A549 (cell line): ENCODE measurements at regions of chr17 and their contacts with region 1.

Region 1: DNA sequence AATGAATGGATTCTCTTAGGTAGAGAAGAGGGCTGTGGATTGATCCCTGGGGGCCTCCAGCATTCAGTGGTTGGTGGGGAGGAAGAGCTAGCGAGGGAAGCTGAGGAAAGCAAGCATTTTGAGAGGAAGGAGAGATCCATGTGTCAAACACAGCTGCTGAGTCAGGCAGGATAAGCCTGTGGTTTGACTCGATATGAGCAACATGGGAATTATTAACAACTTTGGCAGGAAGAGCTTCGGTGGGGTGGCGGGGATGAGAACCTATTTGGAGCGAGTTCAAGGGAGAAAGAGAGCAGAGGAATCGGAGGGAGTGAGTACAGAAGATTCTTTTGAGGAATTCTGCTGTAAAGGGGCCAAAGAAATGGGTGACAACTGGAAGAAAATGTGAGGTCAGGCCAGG is 59.5 kb upstream of the CDC42EP4 start:
- DNase-seq: peak in 1 of 2 experiments; percentile 44
- ATAC-seq: no peak
- H3K4me3 ChIP-seq: no peak overlapping the region
- H3K27ac ChIP-seq: no peak overlapping the region
- H3K4me1 ChIP-seq: 0 out of 3 replicates have a peak, but pooled peaks cover 7% of the 10 kb centered on the region
- CTCF ChIP-seq: no peak
- EP300 ChIP-seq: no peak
- POLR2A ChIP-seq: no peak
- RAD21 ChIP-seq: no peak

Region 2: DNA sequence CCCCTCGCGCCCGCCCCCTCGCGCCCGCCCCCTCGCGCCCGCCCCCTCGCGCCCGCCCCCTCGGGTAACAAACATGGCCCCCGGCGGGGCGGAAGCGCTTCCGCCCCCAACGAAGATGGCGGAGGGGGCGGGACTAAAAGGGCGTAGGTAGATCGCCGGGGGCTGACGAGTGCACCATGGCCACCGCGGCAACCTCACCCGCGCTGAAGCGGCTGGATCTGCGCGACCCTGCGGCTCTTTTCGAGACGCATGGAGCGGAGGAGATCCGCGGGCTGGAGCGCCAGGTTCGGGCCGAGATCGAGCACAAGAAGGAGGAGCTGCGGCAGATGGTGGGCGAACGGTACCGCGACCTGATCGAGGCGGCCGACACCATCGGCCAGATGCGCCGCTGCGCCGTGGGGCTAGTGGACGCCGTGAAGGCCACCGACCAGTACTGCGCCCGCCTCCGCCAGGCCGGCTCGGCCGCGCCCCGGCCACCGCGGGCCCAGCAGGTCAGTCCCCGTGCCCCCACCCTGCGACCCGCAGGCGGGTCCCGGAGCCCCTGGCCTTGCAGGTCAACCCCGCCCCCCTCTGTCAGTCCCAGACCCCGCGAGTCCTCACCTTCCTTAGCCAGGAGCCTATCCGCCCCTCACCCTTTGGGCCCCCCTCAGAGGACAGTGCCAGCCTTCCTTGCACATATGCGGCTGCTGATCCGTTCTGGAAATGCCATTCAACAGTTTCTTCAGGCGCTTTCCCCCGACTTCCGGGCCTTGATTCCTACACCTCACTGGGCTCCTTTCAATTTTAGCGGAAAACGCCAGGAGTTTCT is 178.2 kb before region 1 on chr17 and contains the start of gene COG1:
- CTCF ChIA-PET with region 1: interaction called, 45 read pairs
- POLR2A ChIA-PET with region 1: no interaction called
- DNase-seq: peak; percentile 91 to 96
- ATAC-seq: peak; percentile 72 to 80
- H3K4me3 ChIP-seq: peak within 1 kb of the TSS; percentile 79
- H3K27ac ChIP-seq: peak within 1 kb of the TSS; percentile 88 to 94
- H3K4me1 ChIP-seq: peaks cover 8% of the 10 kb centered on the region; the same call in 1 of the 3 replicates
- CTCF ChIP-seq: no peak
- EP300 ChIP-seq: no peak
- POLR2A ChIP-seq: peak; percentile 74
- RAD21 ChIP-seq: no peak
- polyA plus RNA-seq, gene COG1: 26.0 and 30.6 TPM in 2 replicates

Region 3: GRCh38 chr17:73240561-73240960 is 130.7 kb before region 1 on chr17:
- CTCF ChIA-PET with region 1: interaction called, 975 read pairs
- POLR2A ChIA-PET with region 1: no interaction called
- DNase-seq: no peak
- ATAC-seq: no peak
- H3K4me3 ChIP-seq: no peak overlapping the region
- H3K27ac ChIP-seq: no peak overlapping the region
- H3K4me1 ChIP-seq: no peaks in the 10 kb centered on the region
- CTCF ChIP-seq: no peak
- EP300 ChIP-seq: no peak
- POLR2A ChIP-seq: no peak
- RAD21 ChIP-seq: no peak

Region 4: DNA sequence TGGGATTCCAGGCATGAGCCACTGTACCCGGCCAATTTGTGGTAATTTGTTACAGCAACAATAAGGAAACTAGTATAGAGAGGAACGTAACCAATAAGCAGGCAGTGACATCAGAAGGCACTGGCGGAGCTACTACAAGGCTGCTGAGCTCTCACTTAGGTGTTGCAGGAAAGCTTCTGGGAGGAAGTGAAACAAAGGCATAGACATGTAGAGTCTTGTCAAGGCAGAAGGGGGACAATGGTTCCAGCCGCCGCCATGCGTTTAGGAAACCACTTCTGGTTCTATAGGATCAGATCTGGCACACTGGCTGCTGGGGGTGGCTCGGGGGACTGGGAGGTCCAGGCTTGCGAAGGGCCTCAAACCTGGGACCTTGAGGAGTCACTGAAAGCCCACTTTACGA is 100.2 kb before region 1 on chr17:
- CTCF ChIA-PET with region 1: interaction called, 975 read pairs
- POLR2A ChIA-PET with region 1: no interaction called
- DNase-seq: no peak
- ATAC-seq: no peak
- H3K4me3 ChIP-seq: no peak overlapping the region
- H3K27ac ChIP-seq: no peak overlapping the region
- H3K4me1 ChIP-seq: no peaks in the 10 kb centered on the region
- CTCF ChIP-seq: no peak
- EP300 ChIP-seq: no peak
- POLR2A ChIP-seq: no peak
- RAD21 ChIP-seq: no peak

Region 5: DNA sequence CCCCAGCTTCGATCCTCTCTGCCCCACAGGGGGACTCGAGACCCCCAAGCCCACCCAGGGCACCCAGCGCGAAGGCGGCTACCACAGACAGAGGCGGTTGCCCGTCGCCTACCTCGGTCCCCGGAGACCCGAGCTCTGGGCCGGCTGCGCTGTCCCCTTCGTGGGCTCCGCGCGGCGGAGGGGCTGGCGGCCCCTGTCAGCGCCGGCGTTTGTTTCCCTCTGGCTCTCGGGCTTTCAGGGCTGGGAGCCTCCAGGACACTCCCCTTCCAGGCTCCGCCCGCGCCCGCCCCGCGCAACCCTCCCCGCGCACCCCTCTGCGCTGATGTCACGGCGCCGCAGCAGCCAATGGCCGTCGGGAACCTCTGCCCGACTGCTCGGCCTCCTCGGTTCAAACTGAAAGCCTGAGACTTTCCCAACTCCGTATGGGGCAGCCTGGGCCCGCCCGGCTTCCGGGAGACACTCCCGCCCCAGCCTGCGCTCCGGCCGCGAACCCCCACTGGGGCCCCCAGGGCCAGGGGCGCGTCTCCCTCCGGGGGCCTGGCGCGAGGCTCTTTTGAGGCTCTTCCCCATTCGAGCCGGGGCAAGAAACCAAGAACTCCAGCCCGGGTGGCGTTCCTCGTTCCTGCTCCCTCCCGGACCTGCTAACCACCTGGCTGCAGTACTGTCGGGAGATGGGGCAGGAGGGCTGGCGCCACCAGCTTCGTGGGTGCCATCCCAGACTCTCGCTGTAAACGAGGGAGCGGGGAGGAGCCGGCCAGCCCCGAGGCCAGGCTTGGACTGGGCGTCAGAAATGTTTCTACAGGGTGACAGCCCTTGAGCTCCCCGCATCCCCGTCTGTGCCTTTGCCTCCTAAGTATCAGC is 59.3 kb before region 1 on chr17 and contains the start of gene CDC42EP4:
- CTCF ChIA-PET with region 1: interaction called, 385 read pairs
- POLR2A ChIA-PET with region 1: interaction called, 14 read pairs
- DNase-seq: peak; percentile 94 to 96
- ATAC-seq: peak; percentile 75 to 88
- H3K4me3 ChIP-seq: peak within 1 kb of the TSS; percentile 77
- H3K27ac ChIP-seq: peak within 1 kb of the TSS; percentile 95 to 96
- H3K4me1 ChIP-seq: peaks cover 32% of the 10 kb centered on the region
- CTCF ChIP-seq: no peak
- EP300 ChIP-seq: peak in 1 of 2 experiments; percentile 28; a peak in 1 of 5 replicates
- POLR2A ChIP-seq: peak; percentile 63
- RAD21 ChIP-seq: peak in 1 of 2 experiments; percentile 39; a peak in 3 of 5 replicates
- polyA plus RNA-seq, gene CDC42EP4: 32.9 and 33.8 TPM in 2 replicates

Region 6: DNA sequence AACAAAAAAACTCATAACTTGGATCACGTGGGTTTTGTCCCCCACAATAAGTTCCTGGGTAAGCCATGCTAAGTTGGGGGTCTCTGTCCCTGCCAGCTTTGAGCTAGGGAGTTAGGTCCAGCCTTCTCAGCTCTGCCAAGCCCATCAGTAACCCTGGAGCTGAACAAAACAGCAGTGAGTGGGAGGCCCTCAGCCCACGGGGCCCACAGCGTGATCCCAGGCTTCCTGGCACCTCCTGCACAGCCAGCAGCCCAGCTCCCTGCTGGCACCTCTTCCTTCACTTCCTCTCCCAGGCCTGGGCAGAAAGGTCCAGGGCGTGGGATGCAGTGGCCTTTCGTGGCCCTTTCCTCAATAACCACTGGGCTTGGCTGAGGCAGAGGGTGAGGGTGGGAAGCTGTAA is 23.9 kb before region 1 on chr17:
- CTCF ChIA-PET with region 1: interaction called, 65 read pairs
- POLR2A ChIA-PET with region 1: no interaction called
- DNase-seq: no peak
- ATAC-seq: no peak; a peak in 1 of 6 replicates
- H3K4me3 ChIP-seq: no peak overlapping the region
- H3K27ac ChIP-seq: no peak overlapping the region
- H3K4me1 ChIP-seq: peaks cover 16% of the 10 kb centered on the region
- CTCF ChIP-seq: no peak
- EP300 ChIP-seq: no peak
- POLR2A ChIP-seq: no peak
- RAD21 ChIP-seq: no peak

Region 7: GRCh38 chr17:73387746-73388577 is 16.7 kb after region 1 on chr17:
- CTCF ChIA-PET with region 1: interaction called, 95 read pairs
- POLR2A ChIA-PET with region 1: no interaction called
- DNase-seq: no peak
- ATAC-seq: peak; percentile 10 to 39; a peak in 3 of 6 replicates
- H3K4me3 ChIP-seq: no peak overlapping the region
- H3K27ac ChIP-seq: no peak overlapping the region
- H3K4me1 ChIP-seq: no peaks in the 10 kb centered on the region
- CTCF ChIP-seq: no peak
- EP300 ChIP-seq: no peak
- POLR2A ChIP-seq: no peak
- RAD21 ChIP-seq: no peak

Region 8: GRCh38 chr17:73521376-73521775 is 150.1 kb after region 1 on chr17:
- CTCF ChIA-PET with region 1: no interaction called
- POLR2A ChIA-PET with region 1: no interaction called
- DNase-seq: no peak
- ATAC-seq: no peak
- H3K4me3 ChIP-seq: no peak overlapping the region
- H3K27ac ChIP-seq: no peak overlapping the region
- H3K4me1 ChIP-seq: no peaks in the 10 kb centered on the region
- CTCF ChIP-seq: no peak
- EP300 ChIP-seq: no peak
- POLR2A ChIP-seq: no peak
- RAD21 ChIP-seq: no peak